ENCODE measurements at regions of chr9 and their contacts with region 1.

Region 1: DNA sequence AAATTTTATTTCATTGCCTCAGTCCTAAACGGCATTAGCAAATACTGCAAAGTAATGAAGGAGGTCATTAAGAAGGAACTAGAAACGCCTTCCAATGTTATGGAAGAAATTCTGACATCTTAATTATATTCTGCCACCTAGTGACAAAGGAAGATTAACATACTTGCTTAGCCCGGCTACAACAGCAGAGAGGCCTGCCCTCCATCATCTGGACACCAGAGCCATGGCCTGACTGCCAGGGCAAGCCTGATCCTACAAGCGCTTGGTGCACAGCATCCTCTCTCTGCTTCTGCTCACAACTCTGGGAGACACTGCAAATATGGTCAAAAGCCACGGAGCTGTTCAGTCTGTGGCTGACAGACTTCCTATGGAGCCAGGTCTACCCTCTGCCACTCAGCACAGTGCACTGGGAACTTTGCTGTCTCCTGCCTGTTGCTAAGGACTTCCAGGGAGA is 87.3 kb upstream of the SLC44A1 start:
- DNase-seq: peak; percentile 84
- H3K4me3 ChIP-seq: no peak overlapping the region
- H3K27ac ChIP-seq: no peak overlapping the region
- H3K4me1 ChIP-seq: peaks cover 22% of the 10 kb centered on the region
- H3K27me3 ChIP-seq: no peaks in the 10 kb centered on the region

Region 2: GRCh38 chr9:104863180-104863883 is 293.8 kb before region 1 on chr9:
- in situ Hi-C with region 1: loop called (anchors 5 kb)
- DNase-seq: peak; percentile 94
- H3K4me3 ChIP-seq: peak overlapping the region; percentile 31; the same call in 1 of the 2 replicates
- H3K27ac ChIP-seq: peak overlapping the region; percentile 81
- H3K4me1 ChIP-seq: peaks cover 67% of the 10 kb centered on the region
- H3K27me3 ChIP-seq: no peaks in the 10 kb centered on the region

Region 3: DNA sequence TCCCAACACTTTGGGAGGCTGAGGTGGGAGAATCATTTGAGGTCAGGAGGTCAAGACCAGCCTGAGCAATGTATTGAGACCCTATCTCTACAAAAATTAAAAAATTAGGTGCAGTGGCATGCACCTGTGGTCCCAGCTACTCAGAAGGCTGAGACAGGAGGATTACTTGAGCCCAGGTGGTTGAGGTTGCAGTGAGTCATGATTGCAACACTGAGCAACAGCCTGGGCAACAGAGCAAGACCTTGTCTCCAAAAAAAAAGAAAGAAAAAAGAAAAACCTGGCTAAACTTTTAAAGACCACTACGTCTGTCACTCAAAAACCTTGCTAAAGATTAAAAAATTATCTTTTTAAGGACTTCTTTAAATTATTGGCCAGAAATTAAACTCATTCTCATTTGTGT is 169.4 kb before region 1 on chr9:
- in situ Hi-C with region 1: loop called (anchors 10 kb)
- DNase-seq: peak; percentile 7
- H3K4me3 ChIP-seq: no peak overlapping the region
- H3K27ac ChIP-seq: no peak overlapping the region
- H3K4me1 ChIP-seq: peaks cover 17% of the 10 kb centered on the region
- H3K27me3 ChIP-seq: no peaks in the 10 kb centered on the region

Region 4: DNA sequence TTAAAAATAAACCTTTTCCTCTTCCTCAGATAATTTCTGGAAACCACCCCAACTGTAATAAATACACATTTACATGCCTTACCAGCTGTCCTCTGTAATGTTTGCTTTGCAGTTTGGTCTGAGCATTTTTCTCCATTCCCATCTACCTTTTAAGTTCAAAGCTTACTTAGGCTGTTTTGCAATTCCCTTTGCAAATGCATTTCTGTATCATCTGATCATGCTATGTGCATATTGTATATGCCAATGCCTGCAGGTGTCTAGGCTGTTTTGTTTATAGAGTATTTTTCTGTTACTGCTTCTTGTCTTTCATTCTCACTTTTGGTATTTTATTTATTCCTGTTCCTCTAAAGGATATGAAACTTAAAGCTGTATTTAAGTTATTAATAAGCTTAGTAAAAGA is 173.6 kb after region 1 on chr9:
- in situ Hi-C with region 1: no loop called
- DNase-seq: no peak
- H3K4me3 ChIP-seq: no peak overlapping the region
- H3K27ac ChIP-seq: peak overlapping the region; percentile 53
- H3K4me1 ChIP-seq: peaks cover 52% of the 10 kb centered on the region
- H3K27me3 ChIP-seq: no peaks in the 10 kb centered on the region

Region 5: GRCh38 chr9:105414947-105415661 is 257.9 kb after region 1 on chr9:
- in situ Hi-C with region 1: loop called (anchors 5 kb)
- DNase-seq: peak; percentile 60
- H3K4me3 ChIP-seq: no peak overlapping the region
- H3K27ac ChIP-seq: no peak overlapping the region
- H3K4me1 ChIP-seq: peaks cover 7% of the 10 kb centered on the region; the same call in 1 of the 2 replicates
- H3K27me3 ChIP-seq: no peaks in the 10 kb centered on the region